ENCODE measurements at regions of chr5 and their contacts with region 1.

Region 1: DNA sequence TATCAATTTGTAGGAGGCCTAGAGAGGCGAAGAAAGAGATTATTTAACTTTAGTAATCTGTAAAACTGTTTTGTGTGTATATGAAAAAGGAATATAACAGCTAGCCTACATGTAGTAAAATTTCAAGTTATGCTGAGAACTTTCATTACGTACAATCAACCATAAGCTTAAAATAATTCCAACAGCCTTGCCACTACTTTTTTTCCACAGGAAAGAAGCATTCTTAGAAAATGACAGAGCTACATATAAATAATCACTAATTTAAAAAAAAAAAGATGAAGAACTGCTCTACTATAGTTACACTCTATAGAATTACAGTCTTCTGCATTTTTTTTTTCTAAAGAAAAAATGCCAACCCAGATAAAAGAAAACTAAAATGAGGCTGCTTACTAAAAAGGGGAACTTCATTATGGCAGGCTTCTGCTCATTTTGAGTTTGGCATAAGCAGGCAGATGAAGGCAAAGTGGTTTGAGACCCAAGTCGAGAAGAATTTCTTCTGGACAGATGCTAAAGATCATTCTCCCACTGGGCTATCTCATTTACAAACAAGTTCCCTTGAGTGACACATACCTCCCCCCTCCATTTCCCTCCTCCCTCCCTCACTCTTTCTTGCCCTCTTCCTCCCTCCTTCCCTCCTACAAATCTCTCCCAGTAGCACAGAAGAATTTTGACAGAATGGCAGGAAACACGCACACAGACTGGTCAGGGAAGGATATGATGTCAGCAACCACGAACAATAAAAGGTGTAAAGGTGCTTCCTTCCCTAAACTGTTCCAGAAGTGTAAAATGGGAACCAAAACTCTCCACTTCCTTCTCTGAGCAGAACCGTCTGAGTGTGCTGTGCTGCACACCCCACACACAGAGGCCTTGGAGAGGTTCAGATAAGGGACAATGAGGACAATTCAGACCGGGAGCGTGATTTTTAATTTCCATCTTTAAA is 56.1 kb downstream of the MEF2C start:
- DNase-seq: peak; percentile 20 to 84
- ATAC-seq: peak; percentile 83 to 93 (median 89)
- H3K4me3 ChIP-seq: peak overlapping the region in 7 of 10 donors; percentile 0 to 37 (median 27)
- H3K27ac ChIP-seq: peak overlapping the region; percentile 45 to 92 (median 80)
- H3K4me1 ChIP-seq: peaks cover 4 to 99% (median 91%) of the 10 kb centered on the region in 9 donors
- H3K27me3 ChIP-seq: no peaks in the 10 kb centered on the region
- CTCF ChIP-seq: no peak

Region 2: DNA sequence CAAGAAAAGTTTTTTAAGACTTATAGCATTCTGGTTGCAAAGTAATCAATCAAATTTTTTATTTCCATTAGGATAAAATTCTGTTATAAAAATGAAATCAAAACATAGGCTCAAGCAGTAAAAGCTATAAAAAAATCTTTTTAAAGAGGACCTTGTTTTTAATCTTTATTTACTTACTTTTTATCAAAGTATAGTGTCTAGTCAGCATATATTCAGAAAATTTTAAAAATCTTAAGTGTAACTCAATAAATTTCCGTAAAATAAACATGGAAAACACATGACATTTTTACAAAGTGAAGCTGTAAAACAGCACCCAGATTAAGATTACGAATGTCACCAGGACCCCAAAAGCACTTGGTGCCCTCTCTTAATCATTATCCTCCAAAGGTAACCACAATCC is 860.7 kb before region 1 on chr5:
- intact Hi-C with region 1: no loop called
- DNase-seq: no peak
- ATAC-seq: no peak
- H3K4me3 ChIP-seq: no peak overlapping the region
- H3K27ac ChIP-seq: no peak overlapping the region
- H3K4me1 ChIP-seq: no peaks in the 10 kb centered on the region
- H3K27me3 ChIP-seq: no peaks in the 10 kb centered on the region
- CTCF ChIP-seq: no peak

Region 3: GRCh38 chr5:88736494-88736893 is 90.4 kb before region 1 on chr5:
- intact Hi-C with region 1: loop called in 7 of 10 experiments (anchors 5 to 10 kb)
- DNase-seq: no peak
- ATAC-seq: no peak
- H3K4me3 ChIP-seq: no peak overlapping the region
- H3K27ac ChIP-seq: peak overlapping the region in 1 of 10 donors; percentile 55
- H3K4me1 ChIP-seq: peaks cover 0 to 69% (median 32%) of the 10 kb centered on the region in 9 donors
- H3K27me3 ChIP-seq: no peaks in the 10 kb centered on the region
- CTCF ChIP-seq: no peak

Region 4: DNA sequence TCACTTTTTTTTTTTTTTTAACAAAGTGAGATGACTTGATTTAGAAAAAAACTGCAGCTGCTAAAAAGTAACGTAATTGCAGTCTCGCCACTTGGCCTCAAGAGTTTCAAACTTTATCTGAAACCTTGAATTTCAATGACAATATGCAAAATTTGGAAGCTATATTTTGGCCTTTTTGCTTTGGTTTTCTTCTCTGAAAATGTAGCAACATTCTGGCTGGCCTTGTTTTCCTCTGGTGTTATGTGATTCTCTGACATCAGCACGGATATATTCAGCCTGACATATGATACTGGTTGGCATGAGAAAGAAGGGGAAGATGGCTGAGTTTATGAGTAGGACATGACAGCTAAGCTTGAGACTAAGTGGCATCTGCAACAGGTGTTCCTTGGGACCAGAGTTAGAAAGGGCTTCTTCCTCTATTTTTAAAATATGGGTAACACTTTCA is 80.5 kb before region 1 on chr5:
- intact Hi-C with region 1: loop called in 2 of 10 experiments (anchors 10 kb)
- DNase-seq: no peak
- ATAC-seq: peak in 2 of 8 donors; percentile 46 to 50
- H3K4me3 ChIP-seq: no peak overlapping the region
- H3K27ac ChIP-seq: peak overlapping the region in 1 of 10 donors; percentile 29
- H3K4me1 ChIP-seq: peaks cover 0 to 38% (median 18%) of the 10 kb centered on the region in 9 donors
- H3K27me3 ChIP-seq: no peaks in the 10 kb centered on the region
- CTCF ChIP-seq: no peak

Region 5: GRCh38 chr5:88940713-88941112 is 113.8 kb after region 1 on chr5:
- intact Hi-C with region 1: no loop called
- DNase-seq: no peak
- ATAC-seq: no peak
- H3K4me3 ChIP-seq: no peak overlapping the region
- H3K27ac ChIP-seq: no peak overlapping the region
- H3K4me1 ChIP-seq: peaks cover 0 to 24% (median 0%) of the 10 kb centered on the region in 9 donors
- H3K27me3 ChIP-seq: no peaks in the 10 kb centered on the region
- CTCF ChIP-seq: no peak